ENCODE measurements at regions of chr2 and their contacts with region 1.

Region 1: GRCh38 chr2:207258263-207258991 is 92.7 kb upstream of the KLF7 start:
- DNase-seq: peak; percentile 87 to 88
- ATAC-seq: peak; percentile 85
- H3K4me3 ChIP-seq: no peak overlapping the region
- H3K27ac ChIP-seq: peak overlapping the region; percentile 36 to 83
- H3K4me1 ChIP-seq: peaks cover 0 to 2% of the 10 kb centered on the region in 2 donors
- H3K27me3 ChIP-seq: no peaks in the 10 kb centered on the region

Region 2: DNA sequence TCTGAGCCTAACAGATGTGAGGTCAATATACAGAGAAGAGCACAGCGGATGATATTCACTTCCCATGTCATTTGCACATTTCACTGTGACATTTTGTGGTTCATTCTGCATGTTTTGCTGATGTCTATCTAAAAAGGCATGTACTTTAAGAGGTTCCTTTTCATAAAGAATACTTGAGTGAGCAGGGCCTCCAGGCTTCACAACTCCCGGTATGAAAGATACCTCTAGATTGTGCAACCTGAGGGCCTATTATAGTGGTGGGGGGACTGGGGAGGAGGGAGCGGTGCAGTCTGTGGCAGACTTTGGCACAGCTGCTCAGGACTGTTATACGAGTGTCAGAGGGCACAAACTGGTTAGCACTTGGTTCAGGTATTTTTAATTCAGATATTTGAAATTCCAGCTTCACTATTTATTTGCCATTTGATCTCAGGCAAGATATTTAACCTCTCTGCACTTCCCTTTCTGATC is 264.4 kb before region 1 on chr2:
- intact Hi-C with region 1: no loop called
- DNase-seq: no peak
- ATAC-seq: no peak
- H3K4me3 ChIP-seq: no peak overlapping the region
- H3K27ac ChIP-seq: no peak overlapping the region
- H3K4me1 ChIP-seq: peaks cover 0 to 3% of the 10 kb centered on the region in 2 donors
- H3K27me3 ChIP-seq: no peaks in the 10 kb centered on the region

Region 3: GRCh38 chr2:207334624-207335371 is 76.4 kb after region 1 on chr2:
- intact Hi-C with region 1: loop called in 1 of 2 experiments (anchors 2 kb)
- DNase-seq: peak; percentile 84 to 86
- ATAC-seq: peak; percentile 86
- H3K4me3 ChIP-seq: peak overlapping the region in 1 of 2 donors; percentile 31
- H3K27ac ChIP-seq: peak overlapping the region in 1 of 2 donors; percentile 88
- H3K4me1 ChIP-seq: no peaks in the 10 kb centered on the region
- H3K27me3 ChIP-seq: no peaks in the 10 kb centered on the region

Measured in aorta (tissue), 5 donors.